ENCODE measurements at regions of chr22 and their contacts with region 1.

Region 1: GRCh38 chr22:45009881-45010531 is at the start of gene PHF21B:
- DNase-seq: peak; percentile 70
- H3K4me3 Mint-ChIP-seq: peak within 1 kb of the TSS; percentile 84
- H3K27ac Mint-ChIP-seq: peak within 1 kb of the TSS; percentile 42
- H3K4me1 Mint-ChIP-seq: peaks cover 6% of the 10 kb centered on the region
- H3K27me3 Mint-ChIP-seq: peaks cover 55% of the 10 kb centered on the region
- total RNA-seq, gene PHF21B: 0.07 TPM in 2 replicates

Region 2: DNA sequence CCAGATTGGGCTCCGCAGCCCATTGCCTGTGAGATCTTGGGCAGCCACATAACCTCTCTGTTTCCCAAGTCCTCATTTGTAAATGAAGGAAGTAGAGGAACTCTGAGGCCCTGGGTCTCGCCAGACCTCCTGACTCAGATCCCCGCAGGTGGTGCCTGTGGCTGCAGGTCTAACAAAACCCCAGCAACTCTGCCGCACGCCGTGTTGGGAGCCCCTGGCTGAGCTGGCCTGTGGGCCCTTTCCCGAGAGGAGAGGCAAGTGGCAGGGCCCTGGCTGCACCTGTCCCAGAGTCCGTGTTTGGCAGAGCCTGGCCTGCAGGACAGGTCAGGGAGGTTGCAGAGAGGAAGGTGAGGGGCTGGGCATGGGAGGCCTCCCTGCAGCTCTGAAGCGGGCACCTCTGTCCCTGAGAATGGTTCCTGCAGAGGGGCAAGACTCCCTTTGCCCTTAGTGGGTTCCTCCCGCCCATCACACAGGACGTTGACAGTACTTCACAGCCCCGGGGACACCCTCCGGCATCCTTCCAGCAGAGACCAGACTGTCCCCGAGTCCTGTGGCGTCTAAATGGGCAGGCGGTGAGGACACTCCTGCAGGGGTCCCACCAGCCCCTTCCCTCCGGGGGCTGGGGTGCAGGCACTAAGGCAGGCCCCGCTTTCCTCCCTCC is 189.9 kb before region 1 on chr22:
- intact Hi-C with region 1: no loop called
- DNase-seq: no peak
- H3K4me3 Mint-ChIP-seq: no peak overlapping the region
- H3K27ac Mint-ChIP-seq: no peak overlapping the region
- H3K4me1 Mint-ChIP-seq: no peaks in the 10 kb centered on the region
- H3K27me3 Mint-ChIP-seq: no peaks in the 10 kb centered on the region

Region 3: DNA sequence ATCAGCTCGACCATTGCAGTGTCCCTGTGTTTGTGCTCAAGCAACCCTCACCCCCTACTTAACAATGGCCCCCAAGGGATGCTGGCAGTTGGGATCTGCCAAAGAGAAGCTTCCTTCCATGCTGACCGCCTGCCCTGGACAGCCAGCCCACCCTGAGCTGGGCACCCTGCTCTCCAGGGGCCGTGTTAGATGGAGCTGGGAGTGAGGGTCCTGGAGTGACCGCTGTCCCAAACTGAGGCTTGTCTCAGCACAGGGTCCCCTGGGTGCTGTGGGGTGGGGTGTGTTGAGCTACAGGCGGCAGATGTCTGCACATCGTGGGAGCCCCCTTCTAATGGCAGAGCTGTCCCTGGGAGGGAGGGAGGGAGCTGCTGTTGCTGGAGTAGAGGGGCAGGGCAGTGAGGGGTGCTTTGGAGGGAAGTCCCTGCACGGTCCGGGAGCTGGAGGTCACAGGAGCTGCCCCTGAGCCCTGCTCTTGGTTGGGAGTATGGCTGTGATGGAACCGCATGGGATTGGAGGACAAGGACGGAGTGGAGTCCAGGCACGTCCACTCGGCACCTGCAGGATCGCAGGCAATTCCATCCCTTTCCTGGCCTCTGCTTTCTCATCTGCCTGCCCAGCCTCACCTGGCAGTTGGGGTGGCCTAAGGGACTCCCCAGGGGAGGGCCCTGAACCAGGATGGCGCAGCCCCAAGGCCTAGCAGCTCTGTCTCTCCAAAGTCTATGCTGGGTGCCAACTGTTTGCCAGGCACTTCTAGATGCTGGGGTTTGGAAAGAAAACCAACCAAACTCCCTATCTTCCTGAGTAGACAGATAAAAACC is 131.3 kb before region 1 on chr22:
- intact Hi-C with region 1: no loop called
- DNase-seq: no peak
- H3K4me3 Mint-ChIP-seq: no peak overlapping the region
- H3K27ac Mint-ChIP-seq: no peak overlapping the region
- H3K4me1 Mint-ChIP-seq: no peaks in the 10 kb centered on the region
- H3K27me3 Mint-ChIP-seq: no peaks in the 10 kb centered on the region

Region 4: DNA sequence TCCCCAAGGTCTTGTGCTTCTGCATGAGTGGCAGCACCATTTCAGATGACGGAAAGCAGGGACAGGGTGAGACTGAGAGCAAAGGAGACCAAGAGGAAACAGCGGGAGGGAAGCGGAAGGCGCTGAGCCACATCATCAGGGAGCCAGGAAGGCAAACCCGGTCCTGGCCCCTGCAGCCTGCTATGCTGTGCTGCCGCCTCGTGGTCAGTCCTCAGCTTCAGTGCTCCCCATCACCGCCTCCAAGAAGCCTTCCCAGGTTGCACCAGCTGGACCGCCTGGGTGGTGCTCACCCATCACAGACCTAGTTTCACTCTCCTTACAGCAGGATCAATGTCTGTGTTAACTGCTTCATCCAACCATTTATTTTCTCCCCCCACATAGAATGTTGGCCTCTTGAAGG is 72.8 kb after region 1 on chr22:
- intact Hi-C with region 1: loop called (anchors 1 kb)
- DNase-seq: peak; percentile 59
- H3K4me3 Mint-ChIP-seq: no peak overlapping the region
- H3K27ac Mint-ChIP-seq: no peak overlapping the region
- H3K4me1 Mint-ChIP-seq: peaks cover 5% of the 10 kb centered on the region
- H3K27me3 Mint-ChIP-seq: no peaks in the 10 kb centered on the region

Region 5: DNA sequence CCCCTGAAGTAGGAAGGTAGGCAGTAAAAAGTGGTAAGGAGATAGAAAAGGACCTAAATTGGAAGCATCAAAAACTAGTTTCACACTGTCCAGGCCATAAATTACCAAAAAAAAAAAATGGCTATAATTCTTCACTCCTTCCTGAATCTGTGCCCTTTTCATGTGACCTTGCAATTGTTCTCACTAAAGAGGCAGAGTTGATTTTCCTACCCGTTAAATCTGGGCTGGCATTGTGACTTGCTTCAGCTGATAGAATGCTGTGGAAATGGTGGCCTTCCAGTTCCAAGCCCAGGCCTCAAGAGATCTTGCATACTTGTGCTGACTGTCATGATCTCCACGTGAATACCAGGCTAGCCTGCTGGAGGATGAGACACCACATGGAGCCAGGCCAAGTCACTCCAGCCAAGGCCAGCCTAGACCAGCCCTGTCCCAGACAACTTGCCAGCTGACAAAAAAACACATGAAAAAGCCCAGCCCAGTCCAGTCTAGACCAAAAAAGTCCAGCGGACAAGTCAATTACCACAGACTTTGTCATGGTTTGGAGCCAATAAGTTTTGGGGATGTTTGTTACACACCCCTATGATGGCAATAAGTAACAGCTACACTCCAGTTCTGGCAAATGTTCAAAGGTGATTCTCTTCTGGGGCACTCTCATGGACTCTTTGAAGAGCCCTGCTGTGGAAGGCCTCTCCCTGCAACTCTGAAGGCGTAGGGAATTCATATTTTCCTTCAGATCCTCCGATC is 102.3 kb after region 1 on chr22:
- intact Hi-C with region 1: no loop called
- DNase-seq: no peak
- H3K4me3 Mint-ChIP-seq: no peak overlapping the region
- H3K27ac Mint-ChIP-seq: no peak overlapping the region
- H3K4me1 Mint-ChIP-seq: no peaks in the 10 kb centered on the region
- H3K27me3 Mint-ChIP-seq: peaks cover 8% of the 10 kb centered on the region

Measured in activated CD4-positive, alpha-beta T cell treated with anti-CD3 and anti-CD28 coated beads, Interleukin-2, amount 10 ng/mL, durations not matched to agents 24 days and 14 days (primary cell).